ENCODE measurements at regions of chr7 and their contacts with region 1.

Region 1: DNA sequence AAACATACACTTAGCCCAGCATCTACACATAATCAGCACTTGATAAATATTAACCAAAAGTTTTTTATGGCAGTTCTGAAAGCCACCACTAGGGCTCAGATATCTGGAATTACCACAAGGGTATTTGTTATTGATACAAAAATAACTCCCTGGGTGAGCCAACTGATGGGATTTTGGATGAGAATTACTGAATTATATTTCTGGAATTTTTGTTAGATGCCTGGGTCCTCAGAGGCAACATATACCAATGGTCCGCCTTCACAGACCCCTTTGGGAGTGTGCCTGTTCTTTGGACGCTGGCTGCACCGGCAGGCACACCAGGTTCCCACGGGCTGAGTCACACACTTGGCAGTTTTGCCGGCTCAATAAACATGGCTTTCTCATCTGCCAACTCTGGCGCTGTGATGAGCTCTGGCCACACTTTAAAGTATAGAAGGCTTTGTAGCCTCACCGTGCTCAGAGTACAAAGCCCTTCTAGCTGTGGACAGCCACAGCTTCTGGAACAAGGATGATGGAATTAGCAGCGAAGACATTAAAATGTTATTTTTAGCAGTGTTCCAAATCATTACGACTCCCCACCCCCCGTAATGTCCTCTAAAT is 24.5 kb upstream of the EEPD1 start:
- DNase-seq: no peak
- ATAC-seq: peak; percentile 55; the same call in 2 of the 3 replicates
- H3K4me3 ChIP-seq: no peak overlapping the region
- H3K27ac ChIP-seq: no peak overlapping the region
- H3K4me1 ChIP-seq: no peaks in the 10 kb centered on the region
- H3K27me3 ChIP-seq: no peaks in the 10 kb centered on the region
- CTCF ChIP-seq: peak in 2 of 3 experiments; percentile 29 to 35; a peak in 4 of 6 replicates
- EP300 ChIP-seq: no peak
- POLR2A ChIP-seq: no peak
- RAD21 ChIP-seq: no peak

Region 2: GRCh38 chr7:35831208-35831607 is 297.3 kb before region 1 on chr7:
- CTCF ChIA-PET with region 1: no interaction called
- POLR2A ChIA-PET with region 1: no interaction called
- RAD21 ChIA-PET with region 1: no interaction called
- SMC1A ChIA-PET with region 1: no interaction called
- in situ Hi-C with region 1: no loop called
- intact Hi-C with region 1: no loop called
- DNase-seq: no peak
- ATAC-seq: no peak
- H3K4me3 ChIP-seq: no peak overlapping the region
- H3K27ac ChIP-seq: no peak overlapping the region
- H3K4me1 ChIP-seq: no peaks in the 10 kb centered on the region
- H3K27me3 ChIP-seq: no peaks in the 10 kb centered on the region
- CTCF ChIP-seq: no peak
- EP300 ChIP-seq: no peak
- POLR2A ChIP-seq: no peak
- RAD21 ChIP-seq: no peak

Region 3: DNA sequence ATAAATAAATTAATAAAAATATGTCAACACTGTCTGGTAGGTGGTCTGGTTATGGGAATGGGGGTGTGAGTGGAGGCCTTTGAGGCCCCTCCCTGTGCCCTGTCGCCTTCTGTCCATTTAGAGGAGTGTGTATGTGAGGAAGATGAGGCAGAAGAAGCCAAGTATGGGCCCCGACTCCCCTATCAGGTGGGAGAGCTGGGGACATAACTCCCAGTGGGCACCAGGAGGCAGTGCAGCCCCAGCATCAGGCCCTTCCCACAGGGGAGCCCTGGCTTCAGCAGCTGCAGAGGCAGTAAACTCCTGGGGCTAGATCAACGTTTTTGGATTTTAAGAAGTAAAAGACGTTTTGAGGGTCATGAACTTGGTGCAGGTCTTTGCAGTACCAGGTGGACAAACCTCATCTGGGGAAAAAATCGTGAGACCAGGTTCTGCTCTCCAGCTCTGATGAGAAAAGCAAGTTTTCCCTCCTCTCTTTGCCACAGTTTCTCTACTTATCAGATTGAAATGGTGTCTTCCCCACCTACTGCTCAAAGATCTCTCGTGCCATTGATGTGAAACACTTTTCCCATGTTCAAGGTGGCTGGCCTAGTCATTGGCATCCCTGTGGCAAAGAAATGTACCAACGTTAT is 143.3 kb before region 1 on chr7:
- CTCF ChIA-PET with region 1: no interaction called
- POLR2A ChIA-PET with region 1: no interaction called
- RAD21 ChIA-PET with region 1: interaction called, 4 read pairs
- SMC1A ChIA-PET with region 1: interaction called, 3 read pairs
- in situ Hi-C with region 1: no loop called
- intact Hi-C with region 1: loop called (anchors 5 kb)
- DNase-seq: no peak
- ATAC-seq: peak; percentile 99
- H3K4me3 ChIP-seq: no peak overlapping the region
- H3K27ac ChIP-seq: no peak overlapping the region
- H3K4me1 ChIP-seq: no peaks in the 10 kb centered on the region
- H3K27me3 ChIP-seq: peaks cover 0 to 3% of the 10 kb centered on the region in 2 experiments; a peak in 1 of 4 replicates
- CTCF ChIP-seq: peak; percentile 91 to 96 (median 92)
- EP300 ChIP-seq: no peak
- POLR2A ChIP-seq: no peak
- RAD21 ChIP-seq: peak; percentile 99

Region 4: GRCh38 chr7:36115448-36116321 is 12.9 kb before region 1 on chr7:
- CTCF ChIA-PET with region 1: interaction called, 5 read pairs
- POLR2A ChIA-PET with region 1: no interaction called
- RAD21 ChIA-PET with region 1: interaction called, 7 read pairs
- SMC1A ChIA-PET with region 1: interaction called, 15 read pairs
- in situ Hi-C with region 1: no loop called
- intact Hi-C with region 1: no loop called
- DNase-seq: peak; percentile 79
- ATAC-seq: peak; percentile 100
- H3K4me3 ChIP-seq: no peak overlapping the region
- H3K27ac ChIP-seq: no peak overlapping the region
- H3K4me1 ChIP-seq: peaks cover 11% of the 10 kb centered on the region
- H3K27me3 ChIP-seq: peaks cover 0 to 6% of the 10 kb centered on the region in 2 experiments; a peak in 3 of 4 replicates
- CTCF ChIP-seq: no peak
- EP300 ChIP-seq: peak; percentile 44 to 93; a peak in 3 of 4 replicates
- POLR2A ChIP-seq: no peak
- RAD21 ChIP-seq: no peak